Posterior cingulate gyrus (tissue), 11 donors: ENCODE measurements at regions of chr18 and their contacts with region 1.

Region 1: GRCh38 chr18:23377669-23378301 is 75.3 kb upstream of the RIOK3 start:
- DNase-seq: no peak

Region 2: DNA sequence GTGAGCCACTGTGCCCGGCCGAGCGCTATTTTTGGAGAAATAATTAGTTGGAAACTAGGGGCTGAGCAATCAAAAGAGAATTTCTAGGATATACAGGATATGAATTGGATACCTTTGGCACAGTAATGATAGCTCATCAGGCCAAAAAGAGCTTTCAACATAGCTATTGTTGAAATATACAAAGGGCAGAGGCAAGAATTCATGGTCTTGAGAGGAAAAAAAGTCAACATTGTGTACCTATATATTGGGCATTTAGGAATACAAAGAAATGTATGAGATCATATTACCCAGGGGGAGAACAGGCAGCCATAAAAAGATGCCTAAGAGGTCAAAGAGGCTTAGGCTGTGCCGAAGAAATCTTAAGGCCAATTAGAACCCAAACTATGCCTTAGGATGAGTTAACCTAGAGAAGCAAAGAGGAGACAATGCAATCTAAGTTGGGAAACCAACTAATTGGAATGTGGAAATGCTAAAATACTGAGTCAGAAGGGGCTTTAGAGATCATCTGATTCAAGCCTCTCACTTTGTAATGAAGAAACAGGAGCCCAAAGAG is 345.7 kb before region 1 on chr18:
- intact Hi-C with region 1: loop called (anchors 10 kb)
- DNase-seq: no peak

Region 3: DNA sequence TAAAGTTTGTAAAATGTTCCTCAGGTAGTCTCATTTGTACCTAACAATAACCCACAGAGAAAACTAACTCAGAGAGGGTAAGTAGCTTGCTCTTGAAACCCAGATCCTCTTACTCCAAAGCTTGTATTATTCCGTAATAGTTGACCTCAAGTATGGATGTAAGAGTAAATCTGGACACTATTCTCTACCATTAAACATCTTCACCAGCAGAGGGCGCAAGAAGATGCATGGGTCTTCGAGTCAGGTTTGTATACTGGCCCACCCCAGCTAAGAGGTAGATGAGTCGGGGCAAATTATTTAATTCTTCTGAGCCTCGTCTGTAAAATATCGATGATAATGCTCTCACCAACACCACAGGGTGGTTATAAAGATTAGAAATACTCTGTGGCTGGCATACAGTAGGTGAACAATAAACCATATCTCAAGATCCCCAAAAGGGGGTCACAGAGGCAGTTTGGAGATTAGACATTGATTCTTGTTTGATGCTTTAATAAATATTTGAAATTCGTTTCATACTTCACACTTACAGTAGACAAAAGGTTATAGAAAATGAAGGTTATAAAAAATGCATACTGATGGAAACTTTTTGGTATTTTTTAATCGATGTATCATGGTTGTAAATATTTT is 246.0 kb before region 1 on chr18:
- intact Hi-C with region 1: loop called (anchors 2 kb)
- DNase-seq: peak in 5 of 10 donors; percentile 33 to 84 (median 56)